ENCODE measurements at regions of chr12 and their contacts with region 1.

Region 1: DNA sequence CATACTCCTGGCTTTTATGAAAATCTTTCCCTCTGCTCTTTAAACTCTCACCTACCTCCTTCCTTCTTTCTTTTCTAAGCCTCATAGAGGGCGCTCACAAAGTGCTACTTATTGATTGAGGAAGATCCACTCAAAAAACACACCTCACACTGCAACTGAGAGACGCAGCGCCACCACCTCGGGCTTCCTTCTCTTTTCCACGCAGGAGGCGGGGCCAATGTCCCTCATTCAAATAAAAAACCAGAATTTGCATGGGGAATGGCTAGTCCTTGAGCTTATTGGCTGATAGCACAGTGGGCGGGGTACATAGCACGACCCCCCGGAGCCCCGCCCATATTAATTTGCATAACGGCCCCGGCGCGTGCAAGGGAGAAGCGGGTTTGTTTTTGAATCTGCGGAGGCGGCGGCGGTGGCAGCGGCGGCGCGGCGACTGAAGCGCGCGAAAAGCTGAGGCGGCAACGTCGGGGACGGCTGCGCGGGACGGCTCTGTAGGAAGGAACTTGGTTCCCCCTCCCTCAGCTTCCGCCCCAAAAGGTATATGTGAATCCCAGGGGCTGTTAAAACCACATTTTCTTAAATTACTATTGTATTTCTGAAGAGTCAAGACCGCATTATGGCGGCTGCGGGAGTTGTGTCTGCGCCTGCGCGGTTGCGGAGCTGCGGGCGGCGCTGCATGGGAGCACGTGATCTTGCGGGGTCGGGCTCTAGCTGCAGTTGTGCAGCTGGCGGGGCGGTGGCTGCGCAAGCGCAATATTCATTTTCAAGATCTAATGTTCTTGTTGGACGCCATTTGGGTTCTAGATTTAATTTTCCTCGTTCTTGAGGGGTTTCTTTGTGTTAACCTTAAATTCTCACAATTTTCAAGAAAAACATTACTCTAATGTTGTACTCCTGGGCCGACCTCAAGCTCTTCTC is at the start of gene ATF7IP:
- DNase-seq: peak; percentile 94 to 97
- ATAC-seq: peak; percentile 97 to 99 (median 98)
- H3K4me3 ChIP-seq: peak within 1 kb of the TSS; percentile 26 to 83 (median 72)
- H3K27ac ChIP-seq: peak within 1 kb of the TSS; percentile 82 to 99 (median 96)
- H3K4me1 ChIP-seq: peaks cover 0 to 24% (median 8%) of the 10 kb centered on the region in 9 donors
- H3K27me3 ChIP-seq: no peaks in the 10 kb centered on the region
- CTCF ChIP-seq: peak in 4 of 9 donors; percentile 36 to 61 (median 56)
- total RNA-seq, gene ATF7IP: 37.9 to 85.8 (median 67.3) TPM

Region 2: DNA sequence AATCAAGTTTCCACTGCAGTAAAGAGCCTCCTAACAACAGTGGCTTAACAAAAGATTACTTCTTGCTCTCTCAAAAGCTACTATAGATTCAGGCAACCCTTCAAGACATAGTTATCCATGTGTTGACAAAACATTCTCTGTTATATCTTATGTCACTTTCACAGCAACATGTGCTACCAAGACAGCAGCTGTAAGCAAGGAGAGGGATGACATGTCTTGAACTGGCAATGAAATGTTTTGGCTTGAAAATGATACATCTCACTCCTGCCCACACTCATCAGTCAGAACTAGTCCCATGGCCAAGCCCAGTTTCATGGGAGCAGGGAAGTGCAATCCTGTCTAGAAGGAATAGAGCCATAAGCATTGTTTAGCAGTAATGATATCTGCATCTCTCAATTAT is 373.4 kb before region 1 on chr12:
- intact Hi-C with region 1: no loop called
- DNase-seq: no peak
- ATAC-seq: no peak
- H3K4me3 ChIP-seq: no peak overlapping the region
- H3K27ac ChIP-seq: no peak overlapping the region
- H3K4me1 ChIP-seq: no peaks in the 10 kb centered on the region
- H3K27me3 ChIP-seq: peaks cover 0 to 8% (median under 1%) of the 10 kb centered on the region in 7 donors
- CTCF ChIP-seq: no peak

Region 3: DNA sequence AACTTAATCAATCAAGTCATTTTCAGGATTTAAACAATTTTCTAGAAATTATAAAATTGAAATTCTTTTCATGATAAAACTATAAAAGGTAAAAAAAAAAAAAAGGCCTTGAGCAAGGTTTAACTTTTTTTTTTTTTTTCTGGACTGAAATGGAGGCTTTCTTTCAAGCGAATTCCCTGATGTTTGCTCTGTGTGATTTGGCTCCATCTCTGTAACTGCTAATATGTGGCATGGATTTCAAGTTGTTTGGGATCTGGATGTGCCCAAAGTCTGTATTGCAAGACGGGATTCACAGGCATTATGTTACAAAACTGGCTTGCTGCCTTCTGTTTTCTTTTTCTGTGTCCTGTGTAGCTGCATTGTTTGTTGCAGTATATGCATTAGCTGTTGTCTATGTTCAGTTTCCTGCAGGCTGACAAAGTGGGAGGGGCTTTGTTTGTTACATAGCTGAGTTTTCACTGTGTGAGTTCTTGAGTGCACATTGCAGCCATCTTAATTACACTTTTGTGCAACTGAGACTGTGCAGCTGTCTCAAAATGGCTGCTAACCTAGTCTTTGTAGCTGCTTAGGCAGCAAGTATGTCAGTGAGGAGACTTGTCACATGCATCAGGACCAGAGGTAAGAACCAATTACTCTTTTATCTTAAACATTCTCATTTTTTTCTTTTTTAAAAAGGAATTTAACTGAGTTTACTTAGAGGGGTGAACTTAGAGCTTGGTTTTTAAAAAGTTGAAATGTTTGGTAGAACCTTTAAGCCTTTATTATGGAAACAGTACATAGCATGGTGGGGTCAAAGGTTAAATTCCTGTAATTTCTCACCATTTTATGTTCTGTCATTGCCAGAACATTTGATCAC is 19.5 kb after region 1 on chr12:
- intact Hi-C with region 1: loop called in 2 of 10 experiments (anchors 1 kb)
- DNase-seq: peak in 1 of 2 donors; percentile 79
- ATAC-seq: peak; percentile 91 to 97 (median 96)
- H3K4me3 ChIP-seq: peak overlapping the region; percentile 22 to 47 (median 40)
- H3K27ac ChIP-seq: peak overlapping the region; percentile 21 to 87 (median 78)
- H3K4me1 ChIP-seq: peaks cover 0 to 63% (median 35%) of the 10 kb centered on the region in 9 donors
- H3K27me3 ChIP-seq: no peaks in the 10 kb centered on the region
- CTCF ChIP-seq: no peak

Region 4: GRCh38 chr12:14394317-14395073 is 28.9 kb after region 1 on chr12:
- intact Hi-C with region 1: loop called in 1 of 10 experiments (anchors 2 kb)
- DNase-seq: peak in 1 of 2 donors; percentile 56
- ATAC-seq: peak; percentile 81 to 96 (median 91)
- H3K4me3 ChIP-seq: peak overlapping the region in 7 of 10 donors; percentile 5 to 37 (median 21)
- H3K27ac ChIP-seq: peak overlapping the region in 9 of 10 donors; percentile 24 to 80 (median 67)
- H3K4me1 ChIP-seq: peaks cover 0 to 87% (median 52%) of the 10 kb centered on the region in 9 donors
- H3K27me3 ChIP-seq: no peaks in the 10 kb centered on the region
- CTCF ChIP-seq: peak in 4 of 9 donors; percentile 8 to 32 (median 28)

Region 5: DNA sequence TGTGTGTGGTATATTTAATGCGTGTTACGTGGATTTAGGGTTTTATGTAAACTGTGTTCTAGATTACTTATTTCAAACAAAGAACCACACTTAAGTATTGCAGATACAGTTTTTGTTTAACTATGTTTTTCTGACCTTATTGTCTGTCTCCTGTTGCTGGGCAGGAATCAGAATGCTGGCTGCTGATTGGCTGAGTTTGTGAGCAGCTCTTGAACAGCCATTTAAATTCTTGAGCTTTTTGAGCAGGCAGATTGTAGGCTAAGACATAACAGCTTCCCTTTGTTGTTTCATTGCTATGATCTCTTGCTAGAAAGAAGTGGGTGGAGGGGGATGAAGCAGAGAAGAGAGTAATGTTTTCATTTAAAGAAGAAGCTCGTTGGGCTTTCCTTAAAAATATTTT is 52.2 kb after region 1 on chr12:
- intact Hi-C with region 1: loop called in 5 of 10 experiments (anchors 5 to 10 kb)
- DNase-seq: peak; percentile 29 to 79
- ATAC-seq: peak in 7 of 8 donors; percentile 78 to 91 (median 87)
- H3K4me3 ChIP-seq: peak overlapping the region in 6 of 10 donors; percentile 6 to 31 (median 16)
- H3K27ac ChIP-seq: peak overlapping the region in 7 of 10 donors; percentile 4 to 68 (median 48)
- H3K4me1 ChIP-seq: peaks cover 0 to 90% (median 66%) of the 10 kb centered on the region in 9 donors
- H3K27me3 ChIP-seq: no peaks in the 10 kb centered on the region
- CTCF ChIP-seq: no peak

Region 6: GRCh38 chr12:14454098-14454907 is 88.8 kb after region 1 on chr12:
- intact Hi-C with region 1: loop called in 1 of 10 experiments (anchors 10 kb)
- DNase-seq: no peak
- ATAC-seq: peak in 3 of 8 donors; percentile 38 to 46 (median 45)
- H3K4me3 ChIP-seq: no peak overlapping the region
- H3K27ac ChIP-seq: no peak overlapping the region
- H3K4me1 ChIP-seq: peaks cover 0 to 27% (median 0%) of the 10 kb centered on the region in 9 donors
- H3K27me3 ChIP-seq: no peaks in the 10 kb centered on the region
- CTCF ChIP-seq: peak; percentile 6 to 59 (median 43)

Region 7: GRCh38 chr12:14567351-14568162 is 202.0 kb after region 1 on chr12 and contains the start of gene PLBD1:
- intact Hi-C with region 1: loop called in 1 of 10 experiments (anchors 10 kb)
- DNase-seq: peak; percentile 74 to 81
- ATAC-seq: peak; percentile 88 to 96 (median 91)
- H3K4me3 ChIP-seq: peak within 1 kb of the TSS; percentile 45 to 83 (median 62)
- H3K27ac ChIP-seq: peak within 1 kb of the TSS; percentile 28 to 98 (median 94)
- H3K4me1 ChIP-seq: peaks cover 0 to 29% (median 8%) of the 10 kb centered on the region in 9 donors
- H3K27me3 ChIP-seq: no peaks in the 10 kb centered on the region
- CTCF ChIP-seq: no peak
- total RNA-seq, gene PLBD1: 19.4 to 45.1 (median 30.1) TPM

Region 8: GRCh38 chr12:14769969-14770495 is 404.5 kb after region 1 on chr12:
- intact Hi-C with region 1: loop called in 1 of 10 experiments (anchors 5 kb)
- DNase-seq: peak; percentile 80 to 82
- ATAC-seq: peak; percentile 41 to 81 (median 69)
- H3K4me3 ChIP-seq: peak overlapping the region; percentile 51 to 94 (median 73)
- H3K27ac ChIP-seq: peak overlapping the region; percentile 88 to 98 (median 94)
- H3K4me1 ChIP-seq: peaks cover 4 to 52% (median 25%) of the 10 kb centered on the region in 9 donors
- H3K27me3 ChIP-seq: no peaks in the 10 kb centered on the region
- CTCF ChIP-seq: peak; percentile 64 to 78 (median 75)